Activated CD4-positive, alpha-beta T cell treated with anti-CD3 and anti-CD28 coated beads for 36 hours (primary cell): ENCODE measurements at regions of chr17 and their contacts with region 1.

Region 1: DNA sequence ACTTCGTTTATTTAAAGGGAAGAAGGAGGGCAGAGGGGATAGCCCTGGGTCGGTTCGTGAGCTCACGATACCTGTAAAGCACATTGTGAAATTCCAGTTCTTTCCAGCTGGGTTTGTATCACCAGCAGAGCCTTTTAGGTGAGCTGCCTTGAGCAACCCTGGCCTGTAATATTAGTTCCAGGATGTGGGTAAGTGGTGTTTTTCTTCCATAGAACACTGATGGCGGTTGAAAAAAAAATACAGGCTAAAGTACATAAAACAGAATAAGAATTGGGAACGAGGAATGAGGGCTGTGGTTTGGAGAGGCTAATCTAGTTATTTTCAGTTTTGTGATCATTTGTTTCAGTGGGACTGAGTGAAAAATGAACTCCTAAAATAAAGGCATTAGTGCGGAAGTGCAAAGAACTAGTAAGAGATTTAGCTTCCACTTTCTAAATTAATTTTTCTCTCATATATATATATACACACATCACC is 20.6 kb downstream of the HS3ST3B1 start:
- DNase-seq: no peak
- ATAC-seq: peak; percentile 38
- H3K4me3 Mint-ChIP-seq: no peak overlapping the region
- H3K27ac Mint-ChIP-seq: peak overlapping the region; percentile 58
- H3K4me1 Mint-ChIP-seq: peaks cover 72% of the 10 kb centered on the region
- H3K27me3 Mint-ChIP-seq: no peaks in the 10 kb centered on the region

Region 2: GRCh38 chr17:13256537-13256936 is 1065.0 kb before region 1 on chr17:
- CTCF ChIA-PET with region 1: no interaction called
- POLR2A ChIA-PET with region 1: no interaction called
- intact Hi-C with region 1: no loop called
- DNase-seq: no peak
- ATAC-seq: no peak
- H3K4me3 Mint-ChIP-seq: no peak overlapping the region
- H3K27ac Mint-ChIP-seq: no peak overlapping the region
- H3K4me1 Mint-ChIP-seq: no peaks in the 10 kb centered on the region
- H3K27me3 Mint-ChIP-seq: no peaks in the 10 kb centered on the region

Region 3: GRCh38 chr17:14396547-14396946 is 75.0 kb after region 1 on chr17:
- CTCF ChIA-PET with region 1: no interaction called
- POLR2A ChIA-PET with region 1: no interaction called
- intact Hi-C with region 1: loop called in 1 of 2 experiments (anchors 5 kb)
- DNase-seq: no peak
- ATAC-seq: no peak
- H3K4me3 Mint-ChIP-seq: no peak overlapping the region
- H3K27ac Mint-ChIP-seq: no peak overlapping the region
- H3K4me1 Mint-ChIP-seq: peaks cover 5% of the 10 kb centered on the region
- H3K27me3 Mint-ChIP-seq: no peaks in the 10 kb centered on the region